ENCODE measurements at regions of chr5 and their contacts with region 1.

Region 1: DNA sequence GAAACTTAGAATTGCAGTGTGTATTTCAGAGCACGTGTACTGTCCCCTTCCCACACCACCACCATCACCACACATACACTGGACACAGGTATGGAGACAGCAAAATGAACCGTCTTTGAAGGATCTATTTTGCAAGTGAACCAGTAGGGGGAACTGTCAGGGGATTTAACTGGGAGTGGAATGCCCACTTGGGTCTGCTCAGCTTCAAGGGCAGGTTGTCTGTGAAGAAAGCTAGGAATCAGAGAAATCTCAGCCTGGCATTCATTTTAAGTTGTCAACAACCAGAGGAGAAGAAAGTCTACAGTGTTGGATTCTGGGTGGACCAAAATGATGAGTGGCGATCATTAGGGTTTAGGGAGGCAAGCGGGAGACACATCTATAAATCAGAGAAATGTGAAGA is 147.0 kb downstream of the DCP2 start:
- DNase-seq: no peak
- H3K4me3 ChIP-seq: no peak overlapping the region
- H3K27ac ChIP-seq: no peak overlapping the region
- H3K4me1 ChIP-seq: peaks cover 25% of the 10 kb centered on the region
- H3K27me3 ChIP-seq: no peaks in the 10 kb centered on the region
- CTCF ChIP-seq: peak; percentile 1 to 3

Region 2: DNA sequence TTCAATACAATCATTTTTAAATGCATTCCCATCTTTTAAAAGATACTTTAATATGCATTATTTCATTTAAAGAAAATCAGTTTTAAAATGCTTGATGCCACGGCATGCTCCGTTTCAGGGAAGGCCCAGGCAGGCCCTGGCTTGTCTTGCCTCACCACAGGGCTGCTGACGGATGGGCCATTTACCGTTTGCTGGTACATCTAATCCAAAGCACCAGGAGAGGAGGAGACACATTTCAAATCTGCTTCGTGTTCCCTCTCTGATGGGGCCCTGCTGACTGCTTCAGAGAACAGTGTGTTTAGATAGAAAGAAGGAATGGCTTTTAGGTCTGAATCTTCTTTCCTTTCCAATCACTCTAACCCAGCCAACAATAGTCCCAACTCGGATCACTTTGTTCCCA is 38.2 kb after region 1 on chr5:
- CTCF ChIA-PET with region 1: no interaction called
- dilution Hi-C with region 1: no loop called
- in situ Hi-C with region 1: no loop called
- intact Hi-C with region 1: loop called (anchors 1 kb)
- DNase-seq: peak; percentile 86
- H3K4me3 ChIP-seq: no peak overlapping the region
- H3K27ac ChIP-seq: peak overlapping the region; percentile 82
- H3K4me1 ChIP-seq: peaks cover 57% of the 10 kb centered on the region
- H3K27me3 ChIP-seq: no peaks in the 10 kb centered on the region
- CTCF ChIP-seq: no peak

Region 3: GRCh38 chr5:113166852-113167366 is 43.3 kb after region 1 on chr5:
- CTCF ChIA-PET with region 1: no interaction called
- dilution Hi-C with region 1: no loop called
- in situ Hi-C with region 1: no loop called
- intact Hi-C with region 1: loop called (anchors 2 kb)
- DNase-seq: peak; percentile 97
- H3K4me3 ChIP-seq: no peak overlapping the region
- H3K27ac ChIP-seq: peak overlapping the region; percentile 74
- H3K4me1 ChIP-seq: peaks cover 75% of the 10 kb centered on the region
- H3K27me3 ChIP-seq: no peaks in the 10 kb centered on the region
- CTCF ChIP-seq: no peak

Region 4: GRCh38 chr5:113204525-113205161 is 81.0 kb after region 1 on chr5:
- CTCF ChIA-PET with region 1: no interaction called
- dilution Hi-C with region 1: no loop called
- in situ Hi-C with region 1: no loop called
- intact Hi-C with region 1: loop called (anchors 2 kb)
- DNase-seq: peak; percentile 81
- H3K4me3 ChIP-seq: no peak overlapping the region
- H3K27ac ChIP-seq: peak overlapping the region; percentile 5
- H3K4me1 ChIP-seq: peaks cover 38% of the 10 kb centered on the region
- H3K27me3 ChIP-seq: no peaks in the 10 kb centered on the region
- CTCF ChIP-seq: no peak

Region 5: DNA sequence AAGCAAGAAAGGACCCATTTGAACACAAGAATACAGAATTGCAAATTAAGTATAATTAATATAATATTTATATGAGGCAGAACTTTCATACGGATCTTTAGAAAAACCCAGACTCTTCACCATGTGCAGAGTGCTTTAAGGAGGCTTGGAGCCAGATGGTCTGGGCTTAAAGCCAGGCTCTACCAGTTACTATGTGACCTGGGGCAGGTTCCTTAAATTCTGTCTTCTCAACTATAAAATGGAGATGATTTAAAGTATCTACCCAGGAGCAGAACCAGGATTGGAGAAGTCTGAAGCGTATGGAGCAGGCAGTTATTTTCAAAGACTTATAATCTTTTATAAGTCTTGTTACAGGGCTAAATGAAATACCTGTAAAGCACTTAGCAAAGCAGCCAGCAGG is 109.0 kb after region 1 on chr5:
- CTCF ChIA-PET with region 1: no interaction called
- dilution Hi-C with region 1: no loop called
- in situ Hi-C with region 1: no loop called
- intact Hi-C with region 1: no loop called
- DNase-seq: no peak
- H3K4me3 ChIP-seq: no peak overlapping the region
- H3K27ac ChIP-seq: peak overlapping the region; percentile 63
- H3K4me1 ChIP-seq: peaks cover 48% of the 10 kb centered on the region
- H3K27me3 ChIP-seq: no peaks in the 10 kb centered on the region
- CTCF ChIP-seq: no peak

Region 6: DNA sequence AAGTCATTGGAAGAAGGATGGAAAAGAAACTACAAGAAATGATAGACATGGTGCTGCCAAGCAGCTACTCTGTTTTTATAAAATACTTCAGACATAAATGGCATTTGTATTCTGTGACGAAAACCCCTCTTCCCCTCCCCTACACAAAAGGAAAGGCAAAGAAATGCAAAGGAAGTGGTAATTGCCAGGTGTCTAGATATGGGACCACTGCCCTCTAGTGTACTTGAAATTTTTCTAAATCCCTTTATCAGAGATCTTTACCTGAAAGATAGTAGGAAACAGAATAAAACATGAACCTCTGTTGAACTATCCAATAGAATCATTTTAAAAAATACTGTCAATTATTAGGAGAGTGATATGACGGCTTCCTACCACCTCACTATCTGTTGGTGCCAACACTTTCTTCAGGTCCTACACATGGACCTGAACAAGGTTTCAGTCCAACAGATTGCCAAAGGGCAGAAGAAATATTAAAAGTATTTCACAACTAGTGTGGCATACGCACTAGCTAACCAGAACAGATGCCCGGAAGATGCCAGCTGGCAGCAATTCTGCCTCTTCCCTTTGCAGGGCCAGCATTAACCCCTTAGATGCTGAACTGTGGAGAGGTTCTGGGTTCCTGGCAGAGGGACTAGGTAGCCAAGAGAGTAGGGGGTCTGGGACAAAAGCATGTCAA is 207.1 kb after region 1 on chr5:
- CTCF ChIA-PET with region 1: no interaction called
- dilution Hi-C with region 1: no loop called
- in situ Hi-C with region 1: no loop called
- intact Hi-C with region 1: loop called (anchors 1 kb)
- DNase-seq: peak; percentile 50
- H3K4me3 ChIP-seq: no peak overlapping the region
- H3K27ac ChIP-seq: peak overlapping the region; percentile 25
- H3K4me1 ChIP-seq: peaks cover 12% of the 10 kb centered on the region
- H3K27me3 ChIP-seq: no peaks in the 10 kb centered on the region
- CTCF ChIP-seq: peak; percentile 38 to 56

Measured in mammary epithelial cell (primary cell).